Pancreas (tissue), 10 donors: ENCODE measurements at regions of chr7 and their contacts with region 1.

Region 1: GRCh38 chr7:26490650-26491624 is 199.3 kb downstream of the SNX10 start:
- DNase-seq: no peak
- ATAC-seq: peak in 1 of 4 donors; percentile 37
- H3K4me3 ChIP-seq: no peak overlapping the region
- H3K27ac ChIP-seq: no peak overlapping the region
- H3K4me1 ChIP-seq: peaks cover 0 to 10% (median 8%) of the 10 kb centered on the region in 3 donors
- H3K27me3 ChIP-seq: no peaks in the 10 kb centered on the region
- CTCF ChIP-seq: no peak

Region 2: DNA sequence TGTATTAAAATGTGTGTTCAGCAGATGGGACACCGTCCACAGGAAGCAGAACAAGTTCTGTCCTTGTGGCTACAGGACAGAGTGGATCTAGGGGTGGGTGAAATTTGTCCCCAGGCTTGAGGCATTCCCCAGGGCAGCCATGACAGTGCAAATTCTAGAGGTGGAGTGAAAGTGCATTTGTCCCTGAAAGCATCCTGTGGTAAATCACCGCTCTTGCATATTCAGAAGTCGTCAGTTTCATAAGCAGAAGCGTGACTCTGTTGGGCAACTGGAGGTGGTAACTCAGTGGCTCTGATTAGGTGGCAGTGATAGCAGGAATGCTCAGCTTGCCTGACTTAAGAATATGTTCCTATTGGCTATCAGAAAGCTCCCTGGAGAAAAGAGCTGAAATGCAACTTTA is 102.7 kb before region 1 on chr7:
- intact Hi-C with region 1: loop called in 1 of 3 experiments (anchors 10 kb)
- DNase-seq: no peak
- ATAC-seq: no peak
- H3K4me3 ChIP-seq: no peak overlapping the region
- H3K27ac ChIP-seq: no peak overlapping the region
- H3K4me1 ChIP-seq: no peaks in the 10 kb centered on the region
- H3K27me3 ChIP-seq: no peaks in the 10 kb centered on the region
- CTCF ChIP-seq: no peak